Adrenal gland (tissue), 19 donors: ENCODE measurements at regions of chr2 and their contacts with region 1.

Region 1: GRCh38 chr2:226984750-226985582 is 149.1 kb downstream of the RHBDD1 start:
- DNase-seq: peak; percentile 42 to 80 (median 57)
- H3K4me3 ChIP-seq: no peak overlapping the region
- H3K27ac ChIP-seq: peak overlapping the region in 1 of 5 donors; percentile 19
- H3K4me1 ChIP-seq: peaks cover 0 to 17% of the 10 kb centered on the region in 2 donors
- H3K27me3 ChIP-seq: no peaks in the 10 kb centered on the region
- CTCF ChIP-seq: peak; percentile 48 to 87 (median 83)
- POLR2A ChIP-seq: no peak

Region 2: DNA sequence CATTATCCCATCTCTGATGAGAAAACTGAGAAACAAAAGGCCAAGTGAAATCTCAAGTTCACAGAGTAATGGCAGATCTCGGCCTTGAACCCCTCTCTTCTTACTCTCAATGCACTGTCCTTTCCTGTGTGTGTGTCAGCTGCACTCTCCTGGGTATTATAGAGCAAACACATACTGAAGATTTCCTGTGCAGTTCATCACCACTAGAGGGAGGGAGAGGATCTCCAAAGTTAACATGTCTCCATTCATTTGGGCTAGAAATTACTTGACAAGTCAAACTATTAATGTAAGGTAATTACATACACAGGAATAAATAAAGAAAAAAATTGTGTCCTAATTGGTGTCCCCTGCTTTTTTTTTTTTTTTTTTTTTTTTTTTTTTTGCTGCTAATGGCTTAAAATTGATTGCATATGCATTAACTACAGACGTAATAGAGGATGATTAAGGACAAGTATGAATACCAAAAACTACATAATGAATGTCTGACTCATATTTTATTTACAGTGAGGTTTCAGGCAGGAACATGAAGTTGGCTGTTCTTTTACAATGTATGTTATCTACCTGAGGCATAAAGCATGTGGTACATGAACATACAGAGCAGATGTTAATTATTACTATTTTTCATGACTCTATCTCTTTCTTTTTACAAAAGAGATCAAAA is 1316.2 kb before region 1 on chr2:
- intact Hi-C with region 1: loop called in 1 of 2 experiments (anchors 5 kb)
- DNase-seq: peak in 5 of 7 donors; percentile 10 to 32 (median 23)
- H3K4me3 ChIP-seq: no peak overlapping the region
- H3K27ac ChIP-seq: no peak overlapping the region
- H3K4me1 ChIP-seq: no peaks in the 10 kb centered on the region
- H3K27me3 ChIP-seq: no peaks in the 10 kb centered on the region
- CTCF ChIP-seq: peak; percentile 59 to 75 (median 66)
- POLR2A ChIP-seq: no peak

Region 3: DNA sequence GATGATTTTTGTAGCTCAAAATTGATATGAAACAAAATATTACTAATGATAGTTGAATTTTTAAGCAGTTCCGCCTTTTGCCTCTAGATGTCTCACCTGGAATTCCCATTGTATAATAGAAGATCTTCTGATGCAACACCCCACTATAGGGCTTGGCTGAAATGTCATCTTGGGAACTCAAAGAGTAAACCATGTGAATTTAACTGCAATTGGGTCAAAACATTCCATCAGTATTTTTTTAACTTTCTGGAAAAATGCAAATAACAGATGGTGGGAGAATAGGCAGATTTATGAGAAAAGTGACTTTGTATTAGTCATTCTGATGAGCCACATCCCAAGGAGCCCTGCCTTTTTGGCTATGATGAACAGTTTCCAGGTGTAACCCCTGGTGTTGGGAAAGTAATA is 1095.5 kb before region 1 on chr2:
- intact Hi-C with region 1: loop called in 1 of 2 experiments (anchors 5 kb)
- DNase-seq: peak in 3 of 7 donors; percentile 22 to 49 (median 27)
- H3K4me3 ChIP-seq: no peak overlapping the region
- H3K27ac ChIP-seq: no peak overlapping the region
- H3K4me1 ChIP-seq: peaks cover 0 to 7% of the 10 kb centered on the region in 2 donors
- H3K27me3 ChIP-seq: no peaks in the 10 kb centered on the region
- CTCF ChIP-seq: peak; percentile 73 to 88 (median 84)
- POLR2A ChIP-seq: no peak